Aorta (tissue), 5 donors: ENCODE measurements at regions of chr9 and their contacts with region 1.

Region 1: DNA sequence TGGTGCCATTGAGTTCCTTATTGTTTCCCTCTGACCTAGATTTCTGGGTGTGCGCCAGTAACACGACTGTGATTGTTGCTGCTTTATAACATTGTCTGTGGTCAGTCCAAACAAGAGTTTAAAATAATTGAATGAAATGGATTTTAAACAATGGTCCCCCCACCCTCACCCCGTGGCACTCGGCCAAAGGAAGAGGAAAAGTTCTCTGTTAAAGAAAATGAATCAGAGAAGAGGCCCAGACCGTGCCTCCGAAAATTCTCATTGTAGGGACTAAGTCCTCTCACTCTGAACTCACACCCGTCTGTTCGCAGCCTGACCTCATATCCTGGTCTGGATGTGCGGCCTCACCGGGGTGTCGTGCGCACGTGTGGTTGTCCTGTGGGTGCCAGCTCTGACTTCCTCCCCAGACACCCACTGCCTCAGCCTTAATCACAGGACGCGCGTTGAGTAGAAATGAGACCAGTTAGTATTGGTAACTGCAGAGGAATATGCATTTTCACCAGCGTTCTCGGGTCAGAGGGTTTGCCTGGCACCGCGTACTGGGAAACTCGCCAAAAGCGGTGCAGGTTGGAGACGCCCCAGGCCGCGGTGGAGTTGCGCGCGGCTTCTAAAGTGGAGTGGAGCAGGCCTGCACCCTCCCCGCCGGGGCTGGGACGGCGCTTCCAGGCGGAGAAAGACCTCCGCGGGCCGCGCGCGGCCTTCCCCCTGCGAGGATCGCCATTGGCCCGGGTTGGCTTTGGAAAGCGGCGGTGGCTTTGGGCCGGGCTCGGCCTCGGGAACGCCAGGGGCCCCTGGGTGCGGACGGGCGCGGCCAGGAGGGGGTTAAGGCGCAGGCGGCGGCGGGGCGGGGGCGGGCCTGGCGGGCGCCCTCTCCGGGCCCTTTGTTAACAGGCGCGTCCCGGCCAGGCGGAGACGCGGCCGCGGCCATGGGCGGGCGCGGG is at the start of gene ABL1:
- DNase-seq: peak; percentile 86 to 91
- ATAC-seq: peak; percentile 83
- H3K4me3 ChIP-seq: peak within 1 kb of the TSS; percentile 46 to 99
- H3K27ac ChIP-seq: peak within 1 kb of the TSS; percentile 91 to 95
- H3K4me1 ChIP-seq: no peaks in the 10 kb centered on the region
- H3K27me3 ChIP-seq: no peaks in the 10 kb centered on the region
- total RNA-seq, gene ABL1: 91.7 to 98.7 TPM

Region 2: DNA sequence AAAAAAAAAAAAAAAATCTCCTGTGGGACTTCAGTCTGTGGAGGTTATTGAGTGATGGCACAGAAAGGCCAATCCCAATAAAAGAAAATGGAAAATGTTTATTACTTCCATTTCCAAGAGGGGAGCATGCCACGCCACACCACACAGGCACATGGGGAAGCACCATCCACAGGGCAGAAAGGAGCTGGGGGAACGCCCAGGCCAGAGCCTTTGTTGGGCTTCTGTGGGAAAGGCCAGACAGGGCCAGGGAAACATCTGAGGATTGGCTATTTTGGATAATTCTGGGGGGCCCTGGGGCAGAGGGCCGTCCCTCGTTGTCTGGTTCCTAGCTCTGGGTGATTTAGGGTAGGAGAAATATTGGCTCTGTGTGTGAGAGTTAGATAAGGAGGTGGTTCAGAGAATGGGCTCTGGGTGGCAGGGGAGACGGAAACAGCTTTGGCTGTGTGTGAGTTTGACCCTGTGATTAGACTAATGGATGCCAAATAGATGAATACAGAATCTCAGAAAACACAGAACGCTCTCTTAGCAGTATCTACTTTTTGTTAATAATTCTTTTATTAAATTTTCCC is 48.6 kb before region 1 on chr9:
- intact Hi-C with region 1: loop called (anchors 5 kb)
- DNase-seq: no peak
- ATAC-seq: peak; percentile 63
- H3K4me3 ChIP-seq: no peak overlapping the region
- H3K27ac ChIP-seq: peak overlapping the region in 1 of 2 donors; percentile 5
- H3K4me1 ChIP-seq: peaks cover 4 to 9% of the 10 kb centered on the region in 2 donors
- H3K27me3 ChIP-seq: no peaks in the 10 kb centered on the region